GM18951 (cell line): ENCODE measurements at regions of chr2 and their contacts with region 1.

Region 1: GRCh38 chr2:64488050-64488974 is 34.4 kb downstream of the LGALSL start:
- POLR2A ChIP-seq: no peak

Region 2: DNA sequence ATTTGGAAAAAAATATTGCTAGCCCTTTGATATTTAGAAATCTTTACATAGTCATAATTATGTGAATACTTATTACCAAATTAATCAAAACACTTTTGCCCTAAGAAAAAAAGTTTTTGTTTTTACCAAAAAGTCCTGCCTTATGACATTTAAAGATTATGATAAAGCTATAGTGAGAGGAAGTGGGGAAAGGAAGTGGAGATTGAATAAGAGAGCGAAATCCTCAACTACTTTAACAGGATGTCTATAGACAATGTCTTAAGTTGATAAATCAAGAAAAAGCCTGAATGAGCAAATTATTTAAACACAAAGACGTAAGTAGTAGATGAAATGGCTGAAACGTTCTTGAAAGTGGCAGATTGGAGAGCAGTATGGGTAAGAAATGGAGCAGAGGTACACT is 448.2 kb before region 1 on chr2:
- in situ Hi-C with region 1: loop called (anchors 10 kb)
- POLR2A ChIP-seq: no peak

Region 3: GRCh38 chr2:64342195-64343099 is 145.9 kb before region 1 on chr2:
- in situ Hi-C with region 1: loop called (anchors 5 kb)
- POLR2A ChIP-seq: no peak